ENCODE measurements at regions of chr6 and their contacts with region 1.

Region 1: DNA sequence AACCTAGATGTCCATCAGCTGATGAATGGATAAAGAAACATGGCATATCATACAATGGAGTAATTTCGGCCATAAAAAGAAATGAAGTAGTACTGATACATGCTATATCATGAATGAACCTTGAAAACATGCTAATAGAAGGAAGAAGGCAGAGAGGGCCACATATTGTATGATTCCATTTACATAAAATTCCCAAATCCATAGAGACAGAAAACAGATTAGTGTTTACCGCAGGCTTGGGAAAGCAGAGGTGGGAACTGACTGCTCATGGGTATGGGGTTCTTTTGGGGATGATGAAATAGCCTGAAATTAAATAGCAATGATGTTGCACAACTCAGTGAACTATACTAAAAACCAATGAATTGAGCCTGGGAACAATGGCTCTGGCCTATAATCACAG is 58.3 kb downstream of the SERAC1 start:
- DNase-seq: no peak
- H3K4me3 ChIP-seq: no peak overlapping the region
- H3K27ac ChIP-seq: no peak overlapping the region
- H3K4me1 ChIP-seq: no peaks in the 10 kb centered on the region
- H3K27me3 ChIP-seq: no peaks in the 10 kb centered on the region
- CTCF ChIP-seq: no peak

Region 2: DNA sequence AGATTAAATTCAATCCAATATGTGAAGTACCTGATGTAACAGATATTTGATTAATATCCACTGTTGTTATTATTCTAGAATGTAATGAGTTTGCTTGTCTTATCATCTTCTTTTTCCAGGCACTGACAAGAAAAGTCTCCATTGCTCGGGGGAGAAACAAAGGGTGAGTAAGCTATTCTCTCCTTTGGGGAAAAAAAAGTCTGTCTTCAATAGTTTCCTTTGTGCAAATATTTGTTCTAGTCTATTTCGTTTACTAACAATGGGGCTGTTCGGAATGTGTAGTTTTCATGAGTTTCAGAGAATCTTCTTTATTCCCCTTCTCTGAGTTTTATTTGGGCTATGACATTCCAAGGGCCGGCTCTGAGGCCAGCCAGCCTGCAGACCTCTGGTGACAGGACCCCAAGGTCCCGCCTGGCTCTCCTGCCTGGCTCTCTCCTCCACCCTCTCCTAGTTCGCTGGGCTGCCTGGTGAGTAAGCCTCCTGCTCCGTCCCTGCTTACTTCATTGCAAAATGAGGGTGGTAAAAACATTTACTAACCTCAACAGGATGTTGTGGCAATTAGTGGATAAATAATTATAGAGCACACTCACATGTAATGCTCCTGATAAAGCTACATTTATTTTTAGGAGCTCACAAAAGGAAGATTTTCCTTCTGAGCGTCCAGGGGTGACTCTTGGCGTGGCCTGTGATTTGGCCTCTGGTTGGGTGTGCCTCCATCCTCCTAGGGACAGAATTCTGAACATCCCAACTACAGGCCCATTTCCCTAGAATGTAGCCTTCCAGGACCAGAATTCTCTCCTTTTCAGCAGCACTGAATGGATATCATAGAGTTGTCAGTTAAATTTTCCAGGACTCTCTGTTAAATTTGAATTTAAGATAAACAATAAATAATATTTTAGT is 329.8 kb before region 1 on chr6:
- CTCF ChIA-PET with region 1: no interaction called
- POLR2A ChIA-PET with region 1: interaction called, 10 read pairs
- intact Hi-C with region 1: no loop called
- DNase-seq: no peak
- H3K4me3 ChIP-seq: no peak overlapping the region
- H3K27ac ChIP-seq: no peak overlapping the region
- H3K4me1 ChIP-seq: no peaks in the 10 kb centered on the region
- H3K27me3 ChIP-seq: no peaks in the 10 kb centered on the region
- CTCF ChIP-seq: no peak

Measured in A673 (cell line).